GM18951 (cell line): ENCODE measurements at regions of chr12 and their contacts with region 1.

Region 1: DNA sequence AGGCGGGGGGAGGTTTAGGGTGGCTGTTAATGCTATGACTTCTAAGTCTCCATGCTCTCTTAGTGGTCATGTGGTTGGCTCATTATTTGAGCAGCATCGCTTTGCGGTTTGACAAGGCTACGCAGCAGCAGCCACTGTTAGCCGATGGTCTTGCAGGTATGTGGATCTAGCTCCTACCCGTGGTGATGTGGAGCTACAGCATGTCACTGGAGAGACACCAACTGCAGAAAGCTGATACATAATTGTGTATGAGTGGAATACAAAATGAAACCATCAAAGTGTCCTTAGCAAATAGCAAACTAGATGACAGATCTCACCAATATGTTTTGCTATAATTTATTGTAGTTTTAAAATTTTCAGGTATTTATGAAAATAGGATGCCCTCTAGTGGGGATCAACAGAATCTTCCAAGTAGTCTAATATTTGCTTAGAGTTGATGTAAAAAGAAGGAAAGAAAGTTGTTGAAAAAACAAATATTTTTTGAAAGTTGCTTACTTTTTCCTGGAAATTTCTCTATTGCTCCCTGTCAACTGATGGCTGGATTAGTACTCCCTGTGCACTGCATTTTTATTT is 94.9 kb downstream of the NAV3 start:
- POLR2A ChIP-seq: no peak

Region 2: GRCh38 chr12:77746096-77746495 is 179.5 kb before region 1 on chr12:
- in situ Hi-C with region 1: loop called (anchors 25 kb)
- POLR2A ChIP-seq: no peak

Region 3: GRCh38 chr12:77847060-77847541 is 78.5 kb before region 1 on chr12:
- in situ Hi-C with region 1: no loop called
- POLR2A ChIP-seq: no peak